SK-N-SH (cell line): ENCODE measurements at regions of chr1 and their contacts with region 1.

Region 1: GRCh38 chr1:155934097-155934935 is at the start of gene KHDC4:
- DNase-seq: peak; percentile 89
- H3K4me3 ChIP-seq: peak within 1 kb of the TSS; percentile 76 to 86
- H3K27ac ChIP-seq: peak within 1 kb of the TSS; percentile 93 to 97
- H3K4me1 ChIP-seq: peaks cover 20 to 25% of the 10 kb centered on the region in 2 experiments
- H3K27me3 ChIP-seq: no peaks in the 10 kb centered on the region
- CTCF ChIP-seq: no peak
- EP300 ChIP-seq: peak in 1 of 2 experiments; percentile 62; a peak in 3 of 4 replicates
- RAD21 ChIP-seq: no peak
- polyA plus RNA-seq, gene KHDC4: 43.1 and 94.4 TPM in 2 replicates

Region 2: DNA sequence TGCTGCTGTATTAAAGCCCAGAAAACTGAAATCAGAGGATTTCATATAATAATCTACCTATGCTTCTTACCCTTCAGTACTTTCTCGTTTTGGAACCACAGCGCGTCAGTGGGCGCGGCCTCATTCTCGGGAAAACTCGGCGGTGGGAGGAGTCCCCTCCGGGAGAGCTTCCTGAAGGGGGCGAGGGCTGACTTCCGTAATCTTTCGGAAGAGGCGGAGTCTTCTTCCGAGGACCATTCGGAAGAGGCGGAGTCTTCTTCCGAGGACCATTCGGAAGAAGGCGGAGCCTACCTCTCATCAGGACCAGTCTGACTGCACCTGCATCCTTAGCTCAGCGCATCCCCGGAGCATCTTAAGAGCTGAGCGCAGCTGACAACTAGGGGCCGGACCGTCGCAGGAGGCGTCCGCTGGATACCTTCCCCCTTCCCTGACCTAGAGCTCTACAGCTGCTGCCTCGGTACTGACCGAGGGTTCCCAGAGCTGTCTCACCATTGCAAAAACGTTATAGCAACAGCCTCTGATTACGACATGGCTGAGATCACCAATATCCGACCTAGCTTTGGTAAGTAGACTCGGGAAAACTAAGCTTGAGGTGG is 75.0 kb before region 1 on chr1 and contains the start of gene SYT11:
- CTCF ChIA-PET with region 1: interaction called, 3 read pairs
- POLR2A ChIA-PET with region 1: interaction called, 14 read pairs
- DNase-seq: peak; percentile 87
- H3K4me3 ChIP-seq: peak within 1 kb of the TSS; percentile 66 to 89
- H3K27ac ChIP-seq: peak within 1 kb of the TSS; percentile 95 to 96
- H3K4me1 ChIP-seq: peaks cover 9 to 17% of the 10 kb centered on the region in 2 experiments; a peak in 3 of 4 replicates
- H3K27me3 ChIP-seq: no peaks in the 10 kb centered on the region
- CTCF ChIP-seq: no peak
- EP300 ChIP-seq: no peak
- RAD21 ChIP-seq: peak; percentile 6; the same call in 1 of the 2 replicates
- polyA plus RNA-seq, gene SYT11: 26.7 and 37.0 TPM in 2 replicates

Region 3: DNA sequence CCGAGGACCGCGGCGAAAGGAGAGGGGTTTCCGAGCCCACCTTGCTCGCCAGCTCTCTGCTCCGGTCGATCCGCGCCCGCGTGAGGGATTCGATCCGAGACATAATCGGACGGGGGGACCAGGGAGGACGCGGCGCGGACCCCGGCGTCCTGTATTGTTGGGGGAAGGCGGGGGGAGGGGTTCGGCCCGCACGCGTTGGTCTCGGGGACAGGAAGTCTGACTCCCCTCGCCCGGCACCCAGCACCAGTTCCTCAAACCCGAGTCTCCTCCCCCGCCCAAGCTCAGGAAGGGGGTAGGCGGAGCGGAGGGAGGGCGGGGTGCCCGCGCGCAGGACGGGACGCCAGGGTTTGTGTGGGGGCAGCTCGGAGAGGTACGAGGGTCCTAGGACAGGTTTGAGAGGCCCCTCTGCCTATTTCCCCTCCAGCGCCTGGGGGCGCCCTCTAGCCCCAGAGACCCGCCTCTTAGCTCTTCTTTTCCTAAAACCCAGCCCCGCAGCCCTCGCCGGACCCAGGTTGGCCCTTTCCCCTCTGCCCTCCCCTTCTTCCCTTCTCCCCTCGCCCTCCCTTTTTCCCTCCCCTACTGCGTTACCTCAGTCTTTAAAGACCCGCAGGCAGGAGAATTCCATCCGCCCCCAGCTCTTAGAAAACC is 44.1 kb after region 1 on chr1 and contains the start of gene ARHGEF2:
- CTCF ChIA-PET with region 1: interaction called, 41 read pairs
- POLR2A ChIA-PET with region 1: interaction called, 12 read pairs
- DNase-seq: peak; percentile 91
- H3K4me3 ChIP-seq: peak within 1 kb of the TSS; percentile 88 to 91
- H3K27ac ChIP-seq: peak within 1 kb of the TSS; percentile 87 to 93
- H3K4me1 ChIP-seq: peaks cover 42 to 57% of the 10 kb centered on the region in 2 experiments
- H3K27me3 ChIP-seq: no peaks in the 10 kb centered on the region
- CTCF ChIP-seq: peak; percentile 52
- EP300 ChIP-seq: no peak
- RAD21 ChIP-seq: 0 out of 2 replicates have a peak, but pooled peaks have one; percentile 7
- polyA plus RNA-seq, gene ARHGEF2: 32.4 and 50.8 TPM in 2 replicates